ENCODE measurements at regions of chr12 and their contacts with region 1.

Region 1: DNA sequence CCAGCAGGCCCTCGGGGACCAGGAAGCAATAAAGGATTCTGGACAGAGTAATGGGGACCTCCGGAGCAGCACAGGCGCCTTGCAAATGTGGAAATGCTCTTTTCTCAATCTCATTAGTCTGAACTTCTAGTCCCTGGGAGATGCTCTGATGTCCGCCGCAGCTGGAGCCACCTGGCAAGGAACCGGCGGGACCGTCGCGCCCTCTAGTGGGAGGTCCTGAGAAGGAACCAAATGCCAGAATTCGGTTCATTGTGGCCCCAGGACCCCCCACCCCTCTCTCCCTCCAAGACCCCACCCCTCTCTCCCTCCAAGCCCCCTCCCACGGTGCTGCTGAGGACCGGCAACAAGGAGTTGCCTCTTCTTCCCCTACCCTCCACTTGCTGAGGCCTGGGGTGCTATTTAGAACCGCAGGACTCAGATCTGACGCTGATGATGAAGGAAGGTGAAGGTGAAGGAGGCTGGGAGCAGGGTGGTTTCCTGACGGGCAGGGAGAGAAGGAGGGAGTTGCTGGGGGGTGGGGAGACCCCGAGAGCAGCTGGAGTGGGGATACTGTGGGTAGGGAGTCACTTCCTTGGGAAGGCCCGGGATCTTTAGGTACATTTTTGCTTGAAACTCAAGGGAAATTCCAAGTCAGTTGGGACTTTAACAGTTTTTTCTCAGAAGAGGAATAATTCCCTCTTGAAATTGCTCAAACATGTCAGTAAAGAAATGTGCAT is 42.5 kb downstream of the SMIM41 start:
- DNase-seq: peak; percentile 74 to 78 (median 75)
- ATAC-seq: peak; percentile 33 to 43 (median 40)
- H3K4me3 ChIP-seq: no peak overlapping the region
- H3K27ac ChIP-seq: peak overlapping the region in 2 of 3 donors; percentile 52 to 60
- H3K4me1 ChIP-seq: peaks cover 0 to 38% (median 19%) of the 10 kb centered on the region in 4 donors
- H3K27me3 ChIP-seq: no peaks in the 10 kb centered on the region
- CTCF ChIP-seq: peak; percentile 46 to 79 (median 74)
- POLR2A ChIP-seq: no peak

Region 2: DNA sequence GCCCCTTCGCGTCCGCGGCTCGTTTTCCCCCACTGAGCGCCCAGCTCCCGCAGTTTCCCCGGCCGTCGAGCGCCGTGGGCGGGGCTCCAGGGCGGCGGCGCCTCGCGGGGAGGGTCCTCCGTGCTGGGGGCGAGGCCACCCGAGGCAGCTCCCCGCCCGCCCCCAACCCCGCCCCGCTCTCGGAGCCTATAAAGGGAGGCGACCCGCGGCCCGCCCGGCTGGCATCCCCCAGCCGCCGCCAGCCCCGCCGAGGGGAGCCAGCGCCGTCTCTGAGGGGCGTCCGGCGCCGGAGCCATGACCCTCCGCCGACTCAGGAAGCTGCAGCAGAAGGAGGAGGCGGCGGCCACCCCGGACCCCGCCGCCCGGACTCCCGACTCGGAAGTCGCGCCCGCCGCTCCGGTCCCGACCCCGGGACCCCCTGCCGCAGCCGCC is 115.2 kb before region 1 on chr12 and contains the start of gene TAMALIN:
- intact Hi-C with region 1: loop called in 1 of 2 experiments (anchors 5 kb)
- DNase-seq: peak; percentile 70 to 77 (median 70)
- ATAC-seq: peak; percentile 36 to 63 (median 53)
- H3K4me3 ChIP-seq: peak within 1 kb of the TSS; percentile 44 to 53 (median 48)
- H3K27ac ChIP-seq: peak within 1 kb of the TSS; percentile 57 to 75 (median 64)
- H3K4me1 ChIP-seq: peaks cover 0 to 9% (median 0%) of the 10 kb centered on the region in 4 donors
- H3K27me3 ChIP-seq: no peaks in the 10 kb centered on the region
- CTCF ChIP-seq: no peak
- POLR2A ChIP-seq: peak; percentile 87
- total RNA-seq, gene TAMALIN: 2.9 to 6.5 (median 3.9) TPM

Region 3: DNA sequence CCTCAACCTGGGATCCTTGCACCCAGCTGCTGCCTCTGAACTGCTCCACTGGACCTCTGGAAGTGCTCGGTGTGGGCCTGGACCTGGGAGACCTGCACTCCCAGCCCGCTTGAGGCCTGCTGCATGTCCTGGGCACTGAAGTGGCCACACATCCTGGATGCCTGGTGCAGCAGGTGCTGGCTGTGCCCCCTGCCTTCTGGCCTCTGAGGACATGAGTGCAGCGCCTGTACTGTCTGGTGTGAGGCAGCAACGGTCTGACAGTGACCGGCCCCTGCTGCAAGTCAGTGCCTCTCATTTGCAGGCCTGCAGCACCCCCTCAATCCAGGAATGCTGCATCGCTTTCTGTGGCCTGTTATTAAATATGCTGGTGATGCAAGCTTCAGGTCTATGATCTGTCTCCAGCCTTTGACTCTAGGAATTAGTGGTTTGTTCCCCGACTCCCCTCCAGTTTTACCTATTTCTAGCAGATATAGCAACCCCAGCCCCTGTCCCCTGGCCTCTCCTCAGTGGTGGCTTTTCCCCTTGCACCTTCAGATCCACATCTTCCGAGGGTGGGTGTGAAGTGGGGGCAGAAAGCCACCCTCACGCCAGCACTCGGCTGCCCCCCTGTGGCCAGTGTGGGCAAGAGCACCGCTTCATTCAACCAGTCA is 38.9 kb before region 1 on chr12:
- intact Hi-C with region 1: loop called in 1 of 2 experiments (anchors 5 kb)
- DNase-seq: peak in 2 of 3 donors; percentile 55 to 60
- ATAC-seq: peak; percentile 47 to 68 (median 58)
- H3K4me3 ChIP-seq: no peak overlapping the region
- H3K27ac ChIP-seq: peak overlapping the region in 2 of 3 donors; percentile 66 to 67
- H3K4me1 ChIP-seq: peaks cover 0 to 34% (median 12%) of the 10 kb centered on the region in 4 donors
- H3K27me3 ChIP-seq: no peaks in the 10 kb centered on the region
- CTCF ChIP-seq: peak; percentile 90 to 98 (median 98)
- POLR2A ChIP-seq: no peak

Measured in right lobe of liver (tissue), 6 donors.